CD14-positive monocyte (primary cell): ENCODE measurements at regions of chr1 and their contacts with region 1.

Region 1: GRCh38 chr1:203512830-203513611 is 19.1 kb downstream of the OPTC start:
- DNase-seq: peak; percentile 94 to 97 (median 96)
- H3K4me3 ChIP-seq: no peak overlapping the region
- H3K4me3 Mint-ChIP-seq: peak overlapping the region; percentile 17 to 63
- H3K27ac ChIP-seq: peak overlapping the region; percentile 60 to 61
- H3K27ac Mint-ChIP-seq: peak overlapping the region; percentile 69 to 98 (median 95)
- H3K4me1 ChIP-seq: peaks cover 21 to 23% of the 10 kb centered on the region in 2 donors
- H3K4me1 Mint-ChIP-seq: peaks cover 34% of the 10 kb centered on the region
- H3K27me3 ChIP-seq: no peaks in the 10 kb centered on the region
- H3K27me3 Mint-ChIP-seq: peaks cover 4 to 14% (median 5%) of the 10 kb centered on the region in 3 donors
- CTCF ChIP-seq: no peak

Region 2: GRCh38 chr1:202516434-202516877 is 996.6 kb before region 1 on chr1:
- intact Hi-C with region 1: no loop called
- DNase-seq: no peak
- H3K4me3 ChIP-seq: no peak overlapping the region
- H3K4me3 Mint-ChIP-seq: no peak overlapping the region
- H3K27ac ChIP-seq: no peak overlapping the region
- H3K27ac Mint-ChIP-seq: no peak overlapping the region
- H3K4me1 ChIP-seq: no peaks in the 10 kb centered on the region
- H3K4me1 Mint-ChIP-seq: peaks cover 3% of the 10 kb centered on the region
- H3K27me3 ChIP-seq: peaks cover 0 to 3% of the 10 kb centered on the region in 2 donors
- H3K27me3 Mint-ChIP-seq: peaks cover 4 to 17% (median 10%) of the 10 kb centered on the region in 3 donors
- CTCF ChIP-seq: no peak

Region 3: DNA sequence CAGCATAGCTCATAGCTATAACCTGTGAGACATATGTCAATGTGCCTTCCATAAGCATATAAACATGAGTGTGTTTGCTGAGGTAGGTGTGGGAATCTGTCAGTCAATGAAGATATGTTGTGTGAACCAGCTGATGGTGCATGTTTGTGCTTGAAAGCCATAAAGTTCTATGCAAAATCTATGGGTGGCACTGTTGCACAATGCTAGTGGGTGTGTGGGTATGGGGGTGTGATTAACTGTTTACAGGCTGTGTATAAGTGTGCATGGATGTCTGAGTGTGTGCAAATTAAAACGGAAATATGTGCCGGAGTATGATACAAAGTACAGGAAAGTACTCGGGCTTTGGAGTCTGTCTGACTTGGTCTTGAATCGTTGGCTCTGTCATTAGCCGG is 112.6 kb after region 1 on chr1:
- intact Hi-C with region 1: loop called in 1 of 2 experiments (anchors 5 kb)
- DNase-seq: peak; percentile 25 to 32 (median 30)
- H3K4me3 ChIP-seq: peak overlapping the region in 1 of 3 experiments; percentile 97
- H3K4me3 Mint-ChIP-seq: peak overlapping the region in 1 of 2 donors; percentile 99
- H3K27ac ChIP-seq: peak overlapping the region in 1 of 2 donors; percentile 84
- H3K27ac Mint-ChIP-seq: peak overlapping the region; percentile 87 to 97 (median 96)
- H3K4me1 ChIP-seq: peaks cover 54 to 75% of the 10 kb centered on the region in 2 donors
- H3K4me1 Mint-ChIP-seq: peaks cover 71% of the 10 kb centered on the region
- H3K27me3 ChIP-seq: no peaks in the 10 kb centered on the region
- H3K27me3 Mint-ChIP-seq: no peaks in the 10 kb centered on the region
- CTCF ChIP-seq: no peak

Region 4: GRCh38 chr1:203638950-203639349 is 125.9 kb after region 1 on chr1:
- intact Hi-C with region 1: loop called in 1 of 2 experiments (anchors 5 kb)
- DNase-seq: peak; percentile 73 to 81 (median 81)
- H3K4me3 ChIP-seq: peak overlapping the region in 1 of 3 experiments; percentile 6
- H3K4me3 Mint-ChIP-seq: peak overlapping the region in 1 of 2 donors; percentile 69
- H3K27ac ChIP-seq: no peak overlapping the region
- H3K27ac Mint-ChIP-seq: peak overlapping the region; percentile 33 to 91 (median 83)
- H3K4me1 ChIP-seq: peaks cover 23 to 27% of the 10 kb centered on the region in 2 donors
- H3K4me1 Mint-ChIP-seq: peaks cover 31% of the 10 kb centered on the region
- H3K27me3 ChIP-seq: no peaks in the 10 kb centered on the region
- H3K27me3 Mint-ChIP-seq: peaks cover 0 to 2% (median 0%) of the 10 kb centered on the region in 3 donors
- CTCF ChIP-seq: peak; percentile 54